ENCODE measurements at regions of chr7 and their contacts with region 1.

Region 1: GRCh38 chr7:77940647-77941046 is 142.1 kb downstream of the PHTF2 start:
- DNase-seq: peak; percentile 40
- H3K4me3 Mint-ChIP-seq: no peak overlapping the region
- H3K27ac Mint-ChIP-seq: no peak overlapping the region
- H3K4me1 Mint-ChIP-seq: peaks cover 2% of the 10 kb centered on the region
- H3K27me3 Mint-ChIP-seq: no peaks in the 10 kb centered on the region

Region 2: GRCh38 chr7:77657427-77658224 is 283.0 kb before region 1 on chr7:
- CTCF ChIA-PET with region 1: interaction called, 3 read pairs
- intact Hi-C with region 1: loop called (anchors 2 kb)
- DNase-seq: peak; percentile 18
- H3K4me3 Mint-ChIP-seq: no peak overlapping the region
- H3K27ac Mint-ChIP-seq: no peak overlapping the region
- H3K4me1 Mint-ChIP-seq: no peaks in the 10 kb centered on the region
- H3K27me3 Mint-ChIP-seq: no peaks in the 10 kb centered on the region

Region 3: DNA sequence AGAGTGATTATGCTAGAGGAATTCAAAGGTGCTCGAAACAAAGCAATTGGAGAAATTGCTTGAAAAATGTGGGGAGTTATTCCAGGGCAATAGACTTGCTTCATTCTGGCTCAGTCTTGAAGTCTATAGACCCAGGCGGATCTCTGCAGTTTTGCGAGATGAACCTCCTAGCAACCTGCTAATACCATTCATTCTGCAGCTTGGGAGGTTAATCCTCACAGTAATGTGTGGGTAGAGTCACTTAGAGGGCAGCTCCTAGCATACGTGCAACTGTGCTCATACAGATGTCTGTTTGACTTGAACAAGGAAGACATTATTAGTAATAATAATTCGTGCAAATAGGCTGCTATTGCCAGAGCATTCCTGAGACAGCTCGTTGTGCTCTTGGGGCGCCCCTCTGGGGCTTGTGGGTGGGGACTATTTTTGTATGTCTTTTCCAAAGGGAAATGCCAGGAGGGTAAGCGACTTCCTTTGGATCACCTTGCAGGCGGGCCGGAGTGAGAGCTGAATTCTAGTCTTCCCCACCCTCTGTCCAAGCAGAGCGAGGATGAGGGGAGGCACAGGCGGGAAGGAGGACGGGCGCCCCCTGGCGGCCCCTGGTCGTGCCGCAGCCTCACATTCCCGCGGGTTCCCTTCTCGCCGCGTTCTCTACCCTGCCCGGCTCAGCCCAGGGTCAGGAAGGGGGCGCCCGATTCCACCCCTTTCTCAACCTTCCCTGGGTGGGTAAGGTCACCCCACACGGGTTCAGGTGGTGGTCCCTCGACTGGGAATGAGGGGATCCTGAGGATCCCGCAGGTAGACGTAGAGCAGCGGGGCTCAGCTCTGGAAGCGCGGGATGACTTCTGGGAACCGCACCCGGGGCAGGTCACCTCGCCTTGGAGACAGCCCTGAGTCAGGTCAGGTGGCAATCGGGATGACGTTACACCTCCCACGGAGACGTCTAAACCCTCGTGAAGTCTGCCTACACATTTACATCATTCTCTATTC is 99.4 kb after region 1 on chr7:
- CTCF ChIA-PET with region 1: interaction called, 4 read pairs
- intact Hi-C with region 1: loop called (anchors 1 kb)
- DNase-seq: peak; percentile 54
- H3K4me3 Mint-ChIP-seq: no peak overlapping the region
- H3K27ac Mint-ChIP-seq: no peak overlapping the region
- H3K4me1 Mint-ChIP-seq: no peaks in the 10 kb centered on the region
- H3K27me3 Mint-ChIP-seq: peaks cover 29% of the 10 kb centered on the region

Region 4: DNA sequence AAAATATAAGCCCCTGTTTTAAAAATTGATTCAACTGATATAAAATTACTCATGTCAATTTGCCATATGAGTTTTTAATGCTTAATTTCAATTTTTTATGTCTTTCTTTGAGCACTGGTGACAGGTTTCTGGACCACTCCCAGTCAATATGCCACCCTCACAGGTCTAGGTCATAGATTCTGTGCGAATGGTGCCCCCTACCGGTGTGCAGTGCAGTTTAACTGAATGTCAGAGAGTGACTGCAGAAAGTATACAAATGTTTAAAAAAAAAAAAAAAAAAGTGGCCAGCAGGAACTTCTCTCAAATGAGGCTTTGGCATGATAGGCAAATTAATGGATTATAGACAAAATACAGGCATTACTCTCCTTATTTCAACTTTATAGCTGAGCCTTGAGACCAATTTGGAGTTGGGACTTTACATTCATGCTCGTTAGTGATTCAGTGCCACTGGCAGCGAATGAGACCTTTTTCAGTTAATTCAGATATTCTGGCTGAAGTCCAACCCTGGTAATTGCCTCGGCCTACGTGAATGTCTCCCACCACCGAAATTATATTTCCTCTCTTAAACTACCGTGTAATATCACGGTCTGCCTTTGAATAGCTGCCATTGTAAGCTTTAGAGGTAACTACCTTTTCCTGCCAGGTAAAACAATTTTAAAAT is 285.5 kb after region 1 on chr7:
- CTCF ChIA-PET with region 1: no interaction called
- intact Hi-C with region 1: loop called (anchors 2 kb)
- DNase-seq: peak; percentile 59
- H3K4me3 Mint-ChIP-seq: no peak overlapping the region
- H3K27ac Mint-ChIP-seq: no peak overlapping the region
- H3K4me1 Mint-ChIP-seq: no peaks in the 10 kb centered on the region
- H3K27me3 Mint-ChIP-seq: peaks cover 7% of the 10 kb centered on the region

Measured in activated naive CD4-positive, alpha-beta T cell treated with anti-CD3 and anti-CD28 coated beads for 36 hours (primary cell).